Left ventricle myocardium inferior (tissue), 1 donor: ENCODE measurements at regions of chr12 and their contacts with region 1.

Region 1: GRCh38 chr12:69154585-69155363 is 84.6 kb upstream of the CPSF6 start:
- DNase-seq: peak; percentile 54
- H3K4me3 ChIP-seq: no peak overlapping the region
- H3K27ac ChIP-seq: no peak overlapping the region
- H3K4me1 ChIP-seq: peaks cover 6% of the 10 kb centered on the region
- H3K27me3 ChIP-seq: no peaks in the 10 kb centered on the region
- CTCF ChIP-seq: peak; percentile 95

Region 2: DNA sequence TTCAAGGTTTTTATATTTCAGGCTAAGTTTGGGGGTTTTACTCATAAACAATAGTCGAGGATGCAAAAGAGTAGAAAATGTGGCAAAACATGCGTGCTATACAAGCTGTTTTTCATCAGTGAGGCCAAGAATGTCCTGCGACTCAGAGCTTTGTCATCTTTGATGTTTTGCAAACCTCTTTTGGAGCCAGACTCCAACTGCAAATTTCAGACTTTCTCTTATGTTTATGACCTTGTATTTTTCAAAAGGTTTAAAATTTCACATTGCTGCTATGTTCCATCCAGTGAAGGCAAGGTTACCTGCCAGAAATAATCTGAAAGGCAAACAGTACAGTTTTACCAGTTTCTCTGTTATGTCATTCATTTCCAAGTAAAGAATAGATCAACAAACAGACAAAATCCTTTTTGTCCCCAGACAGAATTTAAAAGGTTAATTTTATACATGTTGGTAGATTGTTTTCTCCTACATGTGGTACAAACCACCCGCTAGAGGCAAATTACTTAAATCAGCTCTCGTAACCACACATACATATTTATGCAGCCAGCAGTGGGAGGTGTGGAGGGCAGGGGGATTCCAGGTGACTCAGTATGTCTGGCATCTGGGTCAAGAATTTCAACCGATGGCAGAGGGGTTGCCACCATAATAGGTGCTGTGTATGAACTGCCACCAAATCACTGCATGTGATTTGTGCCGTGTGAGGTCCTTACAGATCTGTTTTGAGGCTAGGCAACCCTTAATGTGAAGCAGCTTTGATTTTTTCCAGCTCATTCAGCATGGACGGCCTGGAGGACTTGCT is 102.0 kb before region 1 on chr12:
- intact Hi-C with region 1: no loop called
- DNase-seq: no peak
- H3K4me3 ChIP-seq: no peak overlapping the region
- H3K27ac ChIP-seq: no peak overlapping the region
- H3K4me1 ChIP-seq: no peaks in the 10 kb centered on the region
- H3K27me3 ChIP-seq: no peaks in the 10 kb centered on the region
- CTCF ChIP-seq: no peak

Region 3: DNA sequence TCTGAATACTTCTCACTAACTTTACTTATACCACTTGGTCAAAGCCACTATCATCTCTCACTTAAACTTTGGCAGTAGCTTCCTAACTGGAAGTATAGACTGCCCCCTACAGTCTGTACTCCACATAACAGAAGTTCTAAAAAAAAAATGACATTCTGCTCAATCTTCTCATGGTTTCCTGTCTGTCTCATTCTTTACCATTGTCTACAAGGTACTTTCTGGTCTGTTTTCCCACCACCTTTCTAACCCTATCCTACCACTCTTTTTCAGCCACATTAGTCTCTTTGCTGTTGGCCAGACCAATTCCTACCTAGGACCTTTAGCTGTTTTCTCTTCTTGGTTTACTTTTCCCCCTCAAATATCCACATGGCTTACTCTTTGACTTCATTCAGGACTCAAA is 99.3 kb after region 1 on chr12:
- intact Hi-C with region 1: loop called (anchors 5 kb)
- DNase-seq: no peak
- H3K4me3 ChIP-seq: no peak overlapping the region
- H3K27ac ChIP-seq: no peak overlapping the region
- H3K4me1 ChIP-seq: peaks cover 37% of the 10 kb centered on the region
- H3K27me3 ChIP-seq: no peaks in the 10 kb centered on the region
- CTCF ChIP-seq: peak; percentile 77